Naive thymus-derived CD4-positive, alpha-beta T cell (primary cell): ENCODE measurements at regions of chr2 and their contacts with region 1.

Region 1: GRCh38 chr2:181275643-181276070 is 181.5 kb upstream of the ITGA4 start:
- DNase-seq: peak in 7 of 9 donors; percentile 24 to 38 (median 31)
- ATAC-seq: peak; percentile 93
- H3K4me3 ChIP-seq: no peak overlapping the region
- H3K4me3 Mint-ChIP-seq: peak overlapping the region in 5 of 10 donors; percentile 25 to 62 (median 35)
- H3K27ac ChIP-seq: peak overlapping the region; percentile 38
- H3K27ac Mint-ChIP-seq: peak overlapping the region; percentile 57 to 93 (median 83)
- H3K4me1 ChIP-seq: peaks cover 18 to 30% of the 10 kb centered on the region in 2 donors
- H3K4me1 Mint-ChIP-seq: peaks cover 18 to 56% (median 41%) of the 10 kb centered on the region in 7 donors
- H3K27me3 ChIP-seq: no peaks in the 10 kb centered on the region
- H3K27me3 Mint-ChIP-seq: no peaks in the 10 kb centered on the region

Region 2: DNA sequence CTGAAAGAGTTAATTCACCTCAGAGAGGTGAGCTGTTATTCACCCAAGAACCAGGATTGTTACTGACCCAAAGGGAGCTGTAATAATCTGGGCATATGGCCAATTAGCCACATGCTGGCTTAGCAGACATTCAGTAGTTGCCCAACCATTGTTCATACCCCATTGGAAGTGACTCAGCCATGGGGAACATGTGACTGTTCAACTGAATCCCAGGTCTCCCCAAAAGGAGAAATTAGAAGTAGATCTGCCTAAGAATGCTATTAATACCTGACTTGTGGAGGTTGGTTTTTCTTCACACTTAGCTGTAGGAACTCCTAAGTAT is 567.8 kb before region 1 on chr2:
- CTCF ChIA-PET with region 1: no interaction called
- POLR2A ChIA-PET with region 1: no interaction called
- intact Hi-C with region 1: no loop called
- DNase-seq: no peak
- ATAC-seq: no peak
- H3K4me3 ChIP-seq: no peak overlapping the region
- H3K4me3 Mint-ChIP-seq: no peak overlapping the region
- H3K27ac ChIP-seq: no peak overlapping the region
- H3K27ac Mint-ChIP-seq: no peak overlapping the region
- H3K4me1 ChIP-seq: no peaks in the 10 kb centered on the region
- H3K4me1 Mint-ChIP-seq: no peaks in the 10 kb centered on the region
- H3K27me3 ChIP-seq: no peaks in the 10 kb centered on the region
- H3K27me3 Mint-ChIP-seq: peaks cover 0 to 16% (median 7%) of the 10 kb centered on the region in 5 donors

Region 3: DNA sequence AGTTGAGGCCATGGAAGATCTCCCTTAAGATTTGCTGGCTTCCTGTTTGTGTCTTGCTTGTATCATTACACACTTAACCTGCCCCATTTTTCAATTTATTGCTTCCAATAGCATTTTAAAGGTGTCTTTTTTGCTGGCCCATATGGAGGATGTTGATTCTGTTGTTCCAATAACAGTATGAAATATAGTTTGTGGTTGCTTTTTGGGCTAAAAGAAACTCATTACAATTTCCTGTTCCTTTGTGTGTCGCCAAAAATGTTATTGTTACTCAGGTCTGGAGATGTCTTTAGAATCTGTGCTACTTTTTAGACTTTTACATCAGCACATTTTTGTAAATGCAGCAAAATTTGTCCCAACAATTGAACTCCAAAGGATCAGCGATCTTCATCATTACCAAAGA is 52.4 kb before region 1 on chr2:
- CTCF ChIA-PET with region 1: no interaction called
- POLR2A ChIA-PET with region 1: no interaction called
- intact Hi-C with region 1: loop called in 1 of 2 experiments (anchors 5 kb)
- DNase-seq: peak in 6 of 9 donors; percentile 13 to 54 (median 44)
- ATAC-seq: no peak
- H3K4me3 ChIP-seq: peak overlapping the region; percentile 0
- H3K4me3 Mint-ChIP-seq: peak overlapping the region in 9 of 10 donors; percentile 58 to 84 (median 66)
- H3K27ac ChIP-seq: peak overlapping the region; percentile 4
- H3K27ac Mint-ChIP-seq: peak overlapping the region; percentile 57 to 97 (median 88)
- H3K4me1 ChIP-seq: peaks cover 25% of the 10 kb centered on the region in 2 donors
- H3K4me1 Mint-ChIP-seq: peaks cover 7 to 64% (median 37%) of the 10 kb centered on the region in 7 donors
- H3K27me3 ChIP-seq: no peaks in the 10 kb centered on the region
- H3K27me3 Mint-ChIP-seq: no peaks in the 10 kb centered on the region

Region 4: DNA sequence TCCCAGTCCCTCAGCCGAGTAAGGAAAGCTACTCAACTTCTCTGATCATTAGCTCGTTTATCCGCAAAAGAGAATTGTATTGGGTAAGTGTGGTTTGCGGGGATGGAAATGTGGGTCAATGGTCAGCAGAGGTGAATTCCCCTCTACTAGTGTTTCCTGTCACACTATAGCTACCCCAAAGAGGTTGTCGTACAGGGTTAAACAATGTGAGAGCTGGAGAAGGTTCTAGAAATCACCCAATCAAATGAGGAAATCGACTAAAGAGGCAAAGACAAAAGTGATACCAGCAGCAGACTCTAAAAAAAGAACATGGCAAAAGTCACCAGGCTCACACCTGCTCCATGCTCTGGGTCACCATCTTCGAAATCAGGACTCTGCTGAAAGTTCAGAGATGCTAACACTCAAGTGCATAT is 36.9 kb after region 1 on chr2:
- CTCF ChIA-PET with region 1: interaction called, 4 read pairs
- POLR2A ChIA-PET with region 1: interaction called, 3 read pairs
- intact Hi-C with region 1: loop called in 1 of 2 experiments (anchors 5 kb)
- DNase-seq: peak in 2 of 9 donors; percentile 47 to 54
- ATAC-seq: peak; percentile 64
- H3K4me3 ChIP-seq: peak overlapping the region; percentile 4
- H3K4me3 Mint-ChIP-seq: peak overlapping the region; percentile 60 to 92 (median 80)
- H3K27ac ChIP-seq: peak overlapping the region; percentile 66
- H3K27ac Mint-ChIP-seq: peak overlapping the region; percentile 90 to 100 (median 96)
- H3K4me1 ChIP-seq: peaks cover 35 to 47% of the 10 kb centered on the region in 2 donors
- H3K4me1 Mint-ChIP-seq: peaks cover 28 to 67% (median 57%) of the 10 kb centered on the region in 7 donors
- H3K27me3 ChIP-seq: no peaks in the 10 kb centered on the region
- H3K27me3 Mint-ChIP-seq: no peaks in the 10 kb centered on the region